Common myeloid progenitor, CD34-positive (primary cell): ENCODE measurements at regions of chr7 and their contacts with region 1.

Region 1: DNA sequence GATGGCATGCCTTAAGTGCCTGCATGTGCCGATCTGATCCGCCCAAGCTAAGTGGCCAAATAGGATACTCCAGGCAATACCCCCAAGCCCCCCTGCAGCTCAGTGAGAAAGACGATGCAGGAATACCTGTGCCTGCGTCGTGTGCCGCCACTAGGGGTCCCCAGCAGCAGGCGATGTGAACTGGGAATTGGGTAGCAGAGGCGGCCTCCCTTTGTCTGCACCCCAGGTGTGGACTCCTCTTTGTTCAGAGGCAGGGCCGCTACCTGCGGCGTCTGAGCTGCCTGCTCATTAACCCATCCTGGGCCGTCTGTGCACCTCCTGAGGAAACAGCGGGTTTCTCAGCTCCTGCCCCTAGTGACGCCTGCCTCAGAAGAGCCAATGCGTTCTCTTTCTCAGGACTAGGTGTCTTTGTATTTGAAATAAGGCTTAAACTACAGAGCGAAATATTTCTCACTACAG is 4.8 kb upstream of the CHN2 start:
- DNase-seq: peak; percentile 57 to 66 (median 65)
- H3K4me3 ChIP-seq: peak overlapping the region in 2 of 7 experiments; percentile 28 to 52
- H3K27ac ChIP-seq: no peak overlapping the region
- H3K4me1 ChIP-seq: peaks cover 0 to 18% (median 7%) of the 10 kb centered on the region in 4 experiments
- H3K27me3 ChIP-seq: peaks cover 0 to 4% (median 0%) of the 10 kb centered on the region in 5 experiments

Region 2: GRCh38 chr7:28921822-28922221 is 267.9 kb before region 1 on chr7:
- CTCF ChIA-PET with region 1: interaction called, 16 read pairs
- POLR2A ChIA-PET with region 1: no interaction called
- DNase-seq: peak; percentile 71 to 81 (median 80)
- H3K4me3 ChIP-seq: no peak overlapping the region
- H3K27ac ChIP-seq: no peak overlapping the region
- H3K4me1 ChIP-seq: peaks cover 0 to 8% (median 4%) of the 10 kb centered on the region in 4 experiments
- H3K27me3 ChIP-seq: peaks cover 0 to 2% (median 0%) of the 10 kb centered on the region in 5 experiments

Region 3: DNA sequence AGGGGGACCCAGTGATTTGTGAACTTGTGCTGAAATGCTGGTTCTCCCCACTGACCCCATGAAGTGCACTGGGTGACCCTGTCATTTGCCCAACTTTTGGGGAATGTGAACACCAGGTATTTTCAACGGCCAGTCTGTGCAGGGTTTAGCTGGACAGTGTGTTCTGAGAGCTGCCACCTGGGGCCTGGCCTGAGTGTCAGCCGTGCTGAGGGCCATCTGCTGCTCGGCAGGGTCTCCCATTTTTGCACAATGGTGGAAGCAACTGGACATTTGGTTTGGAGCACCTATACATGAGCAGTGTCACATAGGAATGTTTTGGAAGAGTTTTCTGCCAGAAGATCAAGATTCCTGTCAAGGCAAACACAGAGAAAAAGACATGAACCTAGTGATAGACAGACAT is 10.0 kb after region 1 on chr7:
- CTCF ChIA-PET with region 1: interaction called, 10 read pairs
- POLR2A ChIA-PET with region 1: no interaction called
- DNase-seq: no peak
- H3K4me3 ChIP-seq: no peak overlapping the region
- H3K27ac ChIP-seq: no peak overlapping the region
- H3K4me1 ChIP-seq: peaks cover 21 to 32% (median 27%) of the 10 kb centered on the region in 4 experiments
- H3K27me3 ChIP-seq: no peaks in the 10 kb centered on the region

Region 4: DNA sequence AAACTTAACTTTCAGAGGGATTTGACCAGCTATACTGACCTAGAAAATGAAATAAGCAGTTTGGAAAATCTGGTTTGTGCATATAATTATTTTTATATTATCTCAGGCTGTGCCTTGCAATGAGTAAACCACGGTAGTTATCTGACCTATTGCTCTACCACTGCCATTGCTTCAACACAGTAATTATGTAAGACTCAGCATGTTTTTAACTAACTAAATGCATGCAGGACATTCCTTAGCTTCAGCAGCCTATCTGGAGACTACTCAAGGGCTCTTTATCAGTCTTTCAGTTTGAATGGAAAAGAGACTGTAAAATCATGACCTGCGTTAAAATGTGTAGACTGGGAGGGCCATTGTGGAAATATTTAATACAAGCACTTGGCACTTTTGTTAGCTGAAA is 27.3 kb after region 1 on chr7:
- CTCF ChIA-PET with region 1: interaction called, 10 read pairs
- POLR2A ChIA-PET with region 1: no interaction called
- DNase-seq: no peak
- H3K4me3 ChIP-seq: no peak overlapping the region
- H3K27ac ChIP-seq: no peak overlapping the region
- H3K4me1 ChIP-seq: no peaks in the 10 kb centered on the region
- H3K27me3 ChIP-seq: no peaks in the 10 kb centered on the region

Region 5: DNA sequence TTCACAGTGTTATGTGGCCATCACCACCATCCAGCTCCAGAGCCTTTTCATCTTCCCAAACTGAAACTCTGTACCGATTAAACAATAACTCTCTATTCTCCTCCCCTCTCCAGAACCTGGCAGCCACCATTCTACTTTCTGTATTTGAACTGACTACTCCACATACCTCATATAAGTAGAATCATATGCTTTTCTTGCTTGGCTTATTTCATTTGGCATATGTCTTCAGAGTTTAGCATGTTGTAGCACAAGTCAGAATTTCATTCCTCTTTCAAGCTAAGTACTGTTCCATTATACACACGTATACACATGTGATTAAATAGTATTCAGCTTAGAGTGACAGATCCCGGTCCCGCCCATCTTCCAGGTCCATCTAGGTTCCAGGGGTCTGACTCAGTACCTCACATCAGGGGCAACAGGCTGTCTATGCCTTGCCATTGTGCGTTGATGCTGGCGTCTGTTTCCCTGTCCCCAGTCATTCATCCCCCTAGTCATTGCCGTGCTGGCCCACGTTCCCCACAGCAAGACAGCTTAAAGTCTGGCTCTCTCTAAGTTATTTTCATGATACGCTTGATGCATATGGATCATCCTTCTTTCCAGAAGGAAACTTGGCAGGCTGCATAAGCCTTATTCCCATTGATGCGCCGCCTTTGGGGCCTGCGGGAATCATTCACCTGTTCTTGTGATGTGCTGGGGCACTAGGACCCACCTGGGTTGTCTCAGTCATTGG is 113.1 kb after region 1 on chr7:
- CTCF ChIA-PET with region 1: interaction called, 17 read pairs
- POLR2A ChIA-PET with region 1: no interaction called
- DNase-seq: no peak
- H3K4me3 ChIP-seq: no peak overlapping the region
- H3K27ac ChIP-seq: no peak overlapping the region
- H3K4me1 ChIP-seq: no peaks in the 10 kb centered on the region
- H3K27me3 ChIP-seq: no peaks in the 10 kb centered on the region

Region 6: GRCh38 chr7:29337546-29338116 is 147.9 kb after region 1 on chr7:
- CTCF ChIA-PET with region 1: interaction called, 85 read pairs
- POLR2A ChIA-PET with region 1: no interaction called
- DNase-seq: peak; percentile 72 to 95 (median 94)
- H3K4me3 ChIP-seq: peak overlapping the region in 6 of 7 experiments; percentile 1 to 60 (median 36)
- H3K27ac ChIP-seq: peak overlapping the region; percentile 71 to 83
- H3K4me1 ChIP-seq: peaks cover 32 to 66% (median 51%) of the 10 kb centered on the region in 4 experiments
- H3K27me3 ChIP-seq: no peaks in the 10 kb centered on the region

Region 7: DNA sequence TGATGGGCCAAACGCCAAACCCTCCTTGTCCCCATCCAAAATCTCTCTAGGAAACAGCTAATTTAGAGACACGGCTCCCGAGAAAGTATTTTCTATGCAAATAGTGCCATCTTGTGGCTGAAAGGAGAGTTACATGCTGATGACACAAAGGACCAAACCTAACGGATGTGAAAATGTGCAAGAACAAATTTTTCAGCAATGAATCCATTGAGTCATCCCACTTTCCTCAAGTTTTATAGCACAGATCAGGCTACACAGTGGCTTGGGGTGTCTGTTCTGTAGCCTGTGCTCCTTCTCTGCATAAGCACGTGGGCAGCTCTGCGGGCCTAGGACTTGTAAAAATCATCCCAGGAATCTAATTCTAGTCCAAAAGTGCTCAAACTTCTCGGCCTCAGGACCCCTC is 219.1 kb after region 1 on chr7:
- CTCF ChIA-PET with region 1: interaction called, 47 read pairs
- POLR2A ChIA-PET with region 1: no interaction called
- DNase-seq: peak; percentile 61 to 79 (median 64)
- H3K4me3 ChIP-seq: no peak overlapping the region
- H3K27ac ChIP-seq: no peak overlapping the region
- H3K4me1 ChIP-seq: no peaks in the 10 kb centered on the region
- H3K27me3 ChIP-seq: no peaks in the 10 kb centered on the region